Activated CD4-positive, alpha-beta memory T cell treated with anti-CD3 and anti-CD28 coated beads for 36 hours (primary cell): ENCODE measurements at regions of chr11 and their contacts with region 1.

Region 1: DNA sequence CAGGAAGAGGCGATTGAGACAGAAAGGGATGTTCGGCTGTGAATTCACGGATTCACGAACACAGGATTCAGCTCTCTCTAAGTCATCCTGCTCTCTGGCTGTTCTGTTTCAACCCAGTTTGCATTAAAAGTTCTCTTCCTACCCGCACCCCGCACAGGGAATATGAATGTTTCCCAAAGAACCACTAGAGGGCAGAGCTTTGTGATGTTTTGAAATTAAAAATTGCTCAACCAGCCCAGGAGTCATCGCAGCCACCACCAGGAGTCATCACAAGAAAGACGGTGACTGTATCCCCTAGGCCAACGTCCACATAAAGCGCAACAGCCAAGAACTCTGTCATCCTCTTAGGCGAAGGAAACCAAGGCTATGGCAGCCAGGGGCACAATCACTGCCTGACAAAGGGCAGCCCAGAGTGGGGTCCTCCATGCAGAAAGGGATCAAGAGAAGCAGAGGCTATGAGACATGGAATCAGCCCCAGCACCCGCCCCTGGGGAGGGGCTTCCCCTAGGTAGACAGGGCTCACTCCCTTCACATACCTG is 122.4 kb downstream of the WT1 start:
- DNase-seq: peak; percentile 68
- H3K4me3 Mint-ChIP-seq: no peak overlapping the region
- H3K27ac Mint-ChIP-seq: no peak overlapping the region
- H3K4me1 Mint-ChIP-seq: peaks cover 11% of the 10 kb centered on the region
- H3K27me3 Mint-ChIP-seq: peaks cover 11% of the 10 kb centered on the region

Region 2: GRCh38 chr11:32333320-32333991 is 20.5 kb after region 1 on chr11:
- CTCF ChIA-PET with region 1: interaction called, 6 read pairs
- POLR2A ChIA-PET with region 1: no interaction called
- intact Hi-C with region 1: loop called (anchors 2 kb)
- DNase-seq: peak; percentile 44
- H3K4me3 Mint-ChIP-seq: peak overlapping the region; percentile 61
- H3K27ac Mint-ChIP-seq: no peak overlapping the region
- H3K4me1 Mint-ChIP-seq: peaks cover 19% of the 10 kb centered on the region
- H3K27me3 Mint-ChIP-seq: peaks cover 39% of the 10 kb centered on the region

Region 3: DNA sequence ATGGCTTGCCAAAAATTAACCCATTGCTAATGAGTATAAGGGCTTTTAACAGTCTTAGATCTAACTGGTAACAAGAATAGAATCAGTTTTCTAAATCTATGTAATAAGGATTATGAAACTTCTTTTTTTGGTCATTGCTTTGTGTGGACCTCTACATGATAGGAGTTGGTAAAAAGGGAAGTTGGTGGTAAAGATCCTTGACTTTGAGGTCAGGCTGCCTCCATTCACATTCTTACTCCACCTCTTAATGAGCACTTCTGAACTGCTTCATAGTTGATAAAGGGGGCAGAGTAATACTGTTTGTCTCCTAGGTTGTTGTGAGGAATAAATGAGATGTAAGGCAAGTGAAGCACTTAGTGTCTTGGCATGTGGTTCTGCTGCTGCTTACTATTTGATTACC is 281.3 kb after region 1 on chr11:
- CTCF ChIA-PET with region 1: no interaction called
- POLR2A ChIA-PET with region 1: no interaction called
- intact Hi-C with region 1: loop called (anchors 10 kb)
- DNase-seq: no peak
- H3K4me3 Mint-ChIP-seq: no peak overlapping the region
- H3K27ac Mint-ChIP-seq: no peak overlapping the region
- H3K4me1 Mint-ChIP-seq: peaks cover 44% of the 10 kb centered on the region
- H3K27me3 Mint-ChIP-seq: no peaks in the 10 kb centered on the region